Esophagus muscularis mucosa (tissue), 4 donors: ENCODE measurements at regions of chr4 and their contacts with region 1.

Region 1: DNA sequence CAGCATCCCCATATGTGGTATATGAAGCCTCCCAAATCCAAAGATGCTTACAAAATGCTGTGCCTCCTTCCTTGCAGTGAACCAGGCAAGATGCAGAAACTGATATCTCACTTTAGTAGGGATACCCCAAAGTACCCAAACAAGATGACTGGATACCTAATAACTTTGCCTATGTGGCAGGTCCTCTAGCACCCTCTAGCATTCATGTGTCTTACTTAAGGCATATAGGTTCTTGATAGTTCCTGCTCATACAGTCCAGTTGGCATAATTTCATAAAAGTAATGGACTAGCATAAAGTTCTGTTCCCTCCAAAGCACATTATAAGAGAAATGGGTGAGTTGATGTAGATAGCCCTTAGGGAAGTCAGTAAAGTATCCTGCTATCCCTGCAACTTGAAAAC is 36.8 kb upstream of the SPP1 start:
- DNase-seq: no peak
- H3K4me3 ChIP-seq: no peak overlapping the region
- H3K27ac ChIP-seq: no peak overlapping the region
- H3K4me1 ChIP-seq: no peaks in the 10 kb centered on the region
- H3K27me3 ChIP-seq: no peaks in the 10 kb centered on the region
- CTCF ChIP-seq: no peak
- EP300 ChIP-seq: no peak
- POLR2A ChIP-seq: no peak

Region 2: DNA sequence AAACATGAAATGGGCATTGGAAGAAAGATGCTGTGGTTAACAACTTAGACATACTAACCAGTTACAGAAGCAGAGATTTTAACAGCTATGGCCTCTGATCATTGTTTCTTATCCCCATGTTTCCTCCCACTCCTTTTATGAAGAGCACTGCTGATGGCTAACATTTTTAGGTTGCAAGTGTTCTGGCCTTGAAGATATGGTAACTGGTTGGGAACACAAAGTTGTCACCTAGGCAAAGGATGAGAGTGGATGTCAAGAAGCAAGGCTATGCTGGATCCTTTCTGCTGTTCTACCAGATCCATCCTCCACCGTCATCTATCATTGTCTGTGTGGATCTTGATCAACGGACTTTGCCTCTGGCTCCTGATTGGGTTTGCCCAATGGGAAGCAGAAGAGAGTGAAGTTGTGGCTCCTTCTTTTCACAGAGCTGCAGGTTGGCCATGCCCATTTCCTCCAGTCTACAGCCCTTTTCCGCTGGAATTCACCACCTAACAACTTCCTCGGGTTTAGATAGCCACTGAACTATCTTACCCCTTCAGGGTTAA is 12.1 kb before region 1 on chr4:
- intact Hi-C with region 1: loop called (anchors 1 kb)
- DNase-seq: no peak
- H3K4me3 ChIP-seq: no peak overlapping the region
- H3K27ac ChIP-seq: no peak overlapping the region
- H3K4me1 ChIP-seq: no peaks in the 10 kb centered on the region
- H3K27me3 ChIP-seq: no peaks in the 10 kb centered on the region
- CTCF ChIP-seq: no peak
- EP300 ChIP-seq: no peak
- POLR2A ChIP-seq: no peak